Motor neuron (in vitro differentiated cells): ENCODE measurements at regions of chr2 and their contacts with region 1.

Region 1: GRCh38 chr2:230160112-230160660 is 59.6 kb downstream of the SP110 start:
- ATAC-seq: peak in 3 of 8 experiments; percentile 52 to 86 (median 55)
- H3K4me3 ChIP-seq: no peak overlapping the region
- H3K27ac ChIP-seq: no peak overlapping the region
- H3K4me1 ChIP-seq: no peaks in the 10 kb centered on the region

Region 2: DNA sequence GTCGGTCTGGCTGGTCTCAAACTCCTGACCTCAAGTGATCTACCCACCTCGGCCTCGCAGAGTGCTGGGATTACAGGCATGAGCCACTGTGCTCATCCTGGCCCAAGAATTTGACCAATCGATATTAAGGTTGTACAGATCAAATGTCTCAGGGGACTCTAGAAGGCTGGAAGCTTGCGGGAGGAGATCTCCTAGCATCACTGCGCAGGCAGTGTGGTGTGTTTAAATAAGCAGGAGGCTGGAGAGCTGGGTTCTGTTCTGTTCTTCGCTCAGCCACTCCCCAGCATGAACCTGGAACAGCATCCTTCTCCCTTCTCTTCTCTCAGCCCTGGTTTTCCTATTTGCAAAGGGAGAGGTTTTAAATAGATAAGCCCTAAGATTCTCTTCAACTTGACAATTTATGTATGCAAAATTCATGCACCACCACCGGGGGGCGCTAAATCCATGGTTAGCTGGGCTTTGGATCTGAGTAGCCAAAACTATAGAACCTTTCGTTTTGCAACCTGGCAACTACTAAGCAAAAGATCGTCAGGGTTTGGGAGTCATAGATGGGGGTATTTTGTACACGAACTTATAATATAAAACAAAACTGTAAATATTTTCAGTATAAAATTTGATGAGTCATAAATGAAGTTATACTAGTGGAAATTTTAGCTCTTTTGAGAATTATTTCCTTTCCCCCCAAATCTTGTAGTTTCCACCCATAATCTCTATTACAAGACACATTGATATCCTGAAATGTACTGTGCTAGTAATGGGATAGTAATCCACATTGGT is 152.1 kb before region 1 on chr2:
- in situ Hi-C with region 1: loop called in 1 of 9 experiments (anchors 25 kb)
- ATAC-seq: peak in 4 of 8 experiments; percentile 22 to 82 (median 74)
- H3K4me3 ChIP-seq: no peak overlapping the region
- H3K27ac ChIP-seq: no peak overlapping the region
- H3K4me1 ChIP-seq: no peaks in the 10 kb centered on the region

Region 3: DNA sequence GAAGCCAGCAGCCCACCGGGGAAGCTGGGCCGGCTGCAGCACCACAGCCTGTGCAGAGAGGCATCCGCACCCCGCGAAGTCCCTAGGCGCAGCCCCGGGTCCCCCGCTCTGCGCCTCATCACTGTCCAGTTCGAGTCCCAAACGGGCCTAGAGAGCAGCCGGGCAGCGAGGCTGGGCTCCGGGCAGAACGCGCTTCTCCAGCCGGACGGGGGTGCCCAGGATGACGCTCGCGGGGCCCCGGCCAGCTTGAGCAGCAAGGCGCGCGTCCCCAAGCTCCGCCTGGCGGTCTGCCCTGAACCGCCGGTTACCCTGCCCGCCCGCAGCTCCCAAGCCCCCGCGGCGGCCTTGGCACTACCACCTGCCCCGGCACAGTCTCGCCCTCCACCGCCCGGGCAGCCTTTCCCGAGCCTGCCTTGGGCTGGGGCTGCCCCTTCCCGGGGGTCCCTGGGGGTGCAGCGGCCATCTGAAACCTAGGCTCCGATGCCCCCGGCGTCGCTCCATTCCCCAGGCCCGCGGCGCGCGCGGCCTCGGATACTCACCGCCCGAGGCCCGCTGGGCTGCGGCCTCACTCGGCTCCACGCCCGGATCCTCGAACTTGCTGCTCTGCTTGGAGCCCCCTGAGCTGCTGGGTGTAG is 92.1 kb before region 1 on chr2:
- in situ Hi-C with region 1: loop called in 1 of 9 experiments (anchors 25 kb)
- ATAC-seq: peak; percentile 29 to 72 (median 68)
- H3K4me3 ChIP-seq: peak overlapping the region; percentile 70 to 98 (median 96)
- H3K27ac ChIP-seq: peak overlapping the region; percentile 75 to 91
- H3K4me1 ChIP-seq: peaks cover 5 to 8% of the 10 kb centered on the region in 2 donors

Region 4: DNA sequence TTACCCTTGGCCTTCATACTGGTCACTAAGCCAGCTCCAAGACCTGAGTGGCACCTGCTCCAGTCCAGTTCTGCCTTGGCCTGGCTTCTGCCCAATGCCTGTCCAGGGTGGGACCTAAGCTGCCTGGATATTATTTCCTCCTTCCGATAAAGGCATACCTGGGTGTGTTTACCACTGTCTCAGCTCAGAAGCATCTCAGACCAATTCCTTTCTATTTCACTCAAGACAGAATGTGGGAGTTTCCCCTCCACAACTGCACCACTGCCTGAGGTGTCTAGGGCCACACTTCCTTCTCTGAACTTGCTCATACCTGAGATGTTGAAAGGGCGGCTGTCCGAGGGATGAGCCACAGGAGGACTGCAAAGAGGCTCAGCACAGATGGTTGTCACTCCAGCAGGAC is 534.1 kb after region 1 on chr2:
- in situ Hi-C with region 1: no loop called
- ATAC-seq: no peak
- H3K4me3 ChIP-seq: no peak overlapping the region
- H3K27ac ChIP-seq: no peak overlapping the region
- H3K4me1 ChIP-seq: no peaks in the 10 kb centered on the region